ENCODE measurements at regions of chr4 and their contacts with region 1.

Region 1: GRCh38 chr4:127400731-127401346 is 231.9 kb upstream of the INTU start:
- ATAC-seq: peak in 3 of 8 experiments; percentile 89 to 93 (median 92)
- H3K4me3 ChIP-seq: no peak overlapping the region
- H3K27ac ChIP-seq: no peak overlapping the region
- H3K4me1 ChIP-seq: no peaks in the 10 kb centered on the region

Region 2: DNA sequence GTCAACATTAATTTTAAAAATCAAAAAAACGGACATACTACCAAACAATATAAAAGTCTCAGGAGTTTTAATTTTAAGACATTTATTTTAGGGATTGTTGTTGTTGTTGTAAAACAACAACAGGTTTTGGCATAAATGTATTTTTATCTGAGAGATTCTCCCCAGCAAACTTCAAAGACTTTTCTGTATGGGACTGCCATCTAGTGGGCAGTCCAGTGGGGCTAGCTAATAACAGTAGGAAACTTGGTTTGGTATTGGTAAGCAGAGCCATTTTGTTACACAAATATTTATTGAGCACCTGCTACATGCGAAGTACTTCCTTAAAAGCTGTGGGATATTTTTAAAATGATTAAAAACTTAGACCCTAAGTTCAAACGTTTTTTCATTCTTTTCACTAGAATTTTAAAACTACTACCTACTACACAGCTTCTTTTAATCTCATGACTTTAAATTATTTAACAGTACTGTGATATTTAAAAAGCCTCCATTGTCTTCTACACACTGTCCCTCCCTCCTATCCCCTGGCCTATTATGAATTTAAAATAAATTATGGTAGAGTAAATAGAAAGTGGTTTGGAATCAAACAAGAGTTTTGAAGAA is 796.5 kb before region 1 on chr4:
- in situ Hi-C with region 1: loop called in 1 of 9 experiments (anchors 25 kb)
- ATAC-seq: peak in 4 of 8 experiments; percentile 40 to 77 (median 58)
- H3K4me3 ChIP-seq: no peak overlapping the region
- H3K27ac ChIP-seq: no peak overlapping the region
- H3K4me1 ChIP-seq: no peaks in the 10 kb centered on the region

Region 3: GRCh38 chr4:127857641-127858040 is 456.8 kb after region 1 on chr4:
- in situ Hi-C with region 1: no loop called
- ATAC-seq: no peak
- H3K4me3 ChIP-seq: no peak overlapping the region
- H3K27ac ChIP-seq: no peak overlapping the region
- H3K4me1 ChIP-seq: no peaks in the 10 kb centered on the region

Measured in motor neuron (in vitro differentiated cells).